ENCODE measurements at regions of chr1 and their contacts with region 1.

Region 1: DNA sequence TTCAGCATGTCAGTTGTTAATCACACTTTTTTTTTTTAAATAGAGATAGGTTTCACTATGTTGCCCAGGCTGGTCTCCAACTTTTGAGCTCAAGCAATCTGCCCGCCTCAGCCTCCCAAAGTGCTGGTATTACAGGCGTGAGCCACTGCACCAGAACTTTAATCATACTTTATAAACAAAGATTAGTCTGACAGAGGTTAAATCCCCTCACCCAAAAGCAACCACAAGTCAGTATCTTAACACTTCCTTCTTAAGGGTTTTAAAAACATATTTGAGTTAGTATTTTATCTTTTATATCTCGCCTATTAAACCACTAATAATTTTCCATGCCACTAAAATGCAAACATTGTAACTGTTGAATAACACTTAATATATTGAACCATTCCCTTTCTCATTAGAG is 70.2 kb downstream of the COP1 start:
- H3K4me3 ChIP-seq: no peak overlapping the region
- H3K27ac ChIP-seq: no peak overlapping the region
- H3K4me1 ChIP-seq: 0 out of 2 replicates have a peak, but pooled peaks cover 4% of the 10 kb centered on the region
- CTCF ChIP-seq: no peak

Region 2: DNA sequence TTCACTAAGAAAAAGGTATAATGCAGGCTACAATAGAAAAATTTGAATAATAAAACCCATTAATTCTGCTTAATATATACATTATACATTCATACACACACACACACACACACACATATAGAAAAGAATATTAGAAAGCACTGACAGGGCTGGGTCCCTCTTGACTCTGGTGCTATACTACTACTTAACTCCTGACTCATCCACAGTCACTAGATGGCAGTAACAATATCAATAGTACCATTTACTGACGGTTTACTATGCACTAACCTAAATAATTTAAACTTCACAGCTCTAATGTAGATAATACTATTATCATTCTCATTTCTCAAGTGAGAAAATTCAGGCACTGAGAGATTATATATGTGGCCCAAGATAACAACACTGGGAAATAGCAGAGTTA is 17.3 kb before region 1 on chr1:
- CTCF ChIA-PET with region 1: interaction called, 10 read pairs
- POLR2A ChIA-PET with region 1: no interaction called
- H3K4me3 ChIP-seq: no peak overlapping the region
- H3K27ac ChIP-seq: no peak overlapping the region
- H3K4me1 ChIP-seq: no peaks in the 10 kb centered on the region
- CTCF ChIP-seq: 0 out of 2 replicates have a peak, but pooled peaks have one; percentile 18

Measured in HEK293 (cell line).